ENCODE measurements at regions of chr3 and their contacts with region 1.

Region 1: GRCh38 chr3:129160891-129161859 is at the start of gene ISY1:
- DNase-seq: peak; percentile 93 to 96 (median 95)
- H3K4me3 ChIP-seq: peak within 1 kb of the TSS; percentile 84 to 99 (median 92)
- H3K27ac ChIP-seq: peak within 1 kb of the TSS; percentile 94 to 97
- H3K4me1 ChIP-seq: peaks cover 9 to 30% (median 22%) of the 10 kb centered on the region in 4 experiments
- H3K27me3 ChIP-seq: no peaks in the 10 kb centered on the region

Region 2: DNA sequence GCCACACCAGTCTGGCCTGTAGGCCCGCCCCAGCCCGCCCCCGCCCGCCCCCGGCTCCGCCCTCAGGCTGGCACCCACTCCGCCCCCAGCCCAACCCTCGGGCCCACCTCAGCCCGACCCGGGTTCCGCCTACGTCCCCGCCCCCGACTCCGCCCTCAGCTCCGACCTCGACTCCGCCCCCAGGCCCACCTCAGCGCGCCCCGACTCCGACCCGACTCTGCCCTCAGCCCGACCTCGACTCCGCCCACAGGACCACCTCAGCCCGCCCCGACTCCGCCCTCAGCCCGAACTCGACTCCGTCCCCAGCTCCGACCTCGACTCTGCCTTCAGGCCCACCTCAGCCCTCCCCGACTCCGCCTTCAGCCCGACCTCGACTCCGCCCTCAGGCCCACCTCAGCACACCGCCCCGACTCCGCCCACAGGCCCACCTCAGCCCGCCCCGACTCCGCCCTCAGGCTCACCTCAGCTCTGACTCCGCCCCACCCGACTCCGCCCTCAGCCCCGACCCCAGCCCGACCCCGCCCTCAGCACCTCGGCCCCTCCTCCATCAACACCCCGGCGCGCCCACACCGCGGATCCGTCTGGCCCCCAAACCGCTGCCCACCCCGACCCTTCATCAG is 39.3 kb before region 1 on chr3 and contains the start of gene RAB43:
- CTCF ChIA-PET with region 1: interaction called, 13 read pairs
- POLR2A ChIA-PET with region 1: no interaction called
- DNase-seq: peak; percentile 81 to 88 (median 86)
- H3K4me3 ChIP-seq: peak within 1 kb of the TSS; percentile 58 to 90 (median 78)
- H3K27ac ChIP-seq: peak within 1 kb of the TSS in 1 of 2 experiments; percentile 66
- H3K4me1 ChIP-seq: peaks cover 11 to 58% (median 46%) of the 10 kb centered on the region in 4 experiments
- H3K27me3 ChIP-seq: no peaks in the 10 kb centered on the region

Region 3: DNA sequence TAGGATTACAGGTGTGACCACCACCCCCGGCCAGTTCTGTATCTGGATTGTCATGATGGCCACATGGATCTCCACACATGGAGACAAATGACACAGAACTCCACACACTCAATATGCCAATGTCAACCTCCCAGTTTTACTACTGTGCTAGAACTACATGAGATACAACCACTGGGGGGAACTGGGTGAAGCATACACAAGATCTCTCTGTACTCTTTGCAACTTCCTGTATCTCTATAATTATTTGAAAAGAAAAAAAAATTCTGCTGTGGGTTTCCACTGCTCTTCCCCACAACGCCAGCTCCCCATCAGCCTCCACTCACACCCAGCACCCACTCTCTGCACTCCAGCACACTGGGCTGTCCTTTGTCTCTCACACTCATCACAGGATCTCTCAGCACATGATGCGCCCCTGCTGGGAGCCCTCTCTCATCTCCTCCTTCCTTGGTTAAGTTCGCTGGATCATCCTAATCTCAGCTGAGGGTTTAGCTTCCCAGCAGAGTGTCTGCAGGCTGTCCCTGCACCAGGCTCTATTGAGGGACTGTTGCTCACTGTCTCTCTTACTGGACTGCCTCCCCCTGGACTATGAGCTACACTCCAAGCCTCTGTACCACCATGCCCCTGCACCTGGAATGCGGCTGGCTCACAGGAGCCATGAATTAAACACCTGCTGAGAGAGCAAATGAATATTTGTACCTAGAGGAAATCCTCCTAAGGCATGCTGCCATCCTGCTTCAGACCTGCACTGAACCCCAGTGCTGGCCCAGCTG is 28.9 kb before region 1 on chr3:
- CTCF ChIA-PET with region 1: interaction called, 11 read pairs
- POLR2A ChIA-PET with region 1: no interaction called
- DNase-seq: no peak
- H3K4me3 ChIP-seq: no peak overlapping the region
- H3K27ac ChIP-seq: no peak overlapping the region
- H3K4me1 ChIP-seq: peaks cover 0 to 11% (median 11%) of the 10 kb centered on the region in 4 experiments
- H3K27me3 ChIP-seq: no peaks in the 10 kb centered on the region

Region 4: GRCh38 chr3:129144786-129145185 is 16.4 kb before region 1 on chr3:
- CTCF ChIA-PET with region 1: no interaction called
- POLR2A ChIA-PET with region 1: no interaction called
- DNase-seq: no peak
- H3K4me3 ChIP-seq: no peak overlapping the region
- H3K27ac ChIP-seq: no peak overlapping the region
- H3K4me1 ChIP-seq: no peaks in the 10 kb centered on the region
- H3K27me3 ChIP-seq: no peaks in the 10 kb centered on the region

Region 5: DNA sequence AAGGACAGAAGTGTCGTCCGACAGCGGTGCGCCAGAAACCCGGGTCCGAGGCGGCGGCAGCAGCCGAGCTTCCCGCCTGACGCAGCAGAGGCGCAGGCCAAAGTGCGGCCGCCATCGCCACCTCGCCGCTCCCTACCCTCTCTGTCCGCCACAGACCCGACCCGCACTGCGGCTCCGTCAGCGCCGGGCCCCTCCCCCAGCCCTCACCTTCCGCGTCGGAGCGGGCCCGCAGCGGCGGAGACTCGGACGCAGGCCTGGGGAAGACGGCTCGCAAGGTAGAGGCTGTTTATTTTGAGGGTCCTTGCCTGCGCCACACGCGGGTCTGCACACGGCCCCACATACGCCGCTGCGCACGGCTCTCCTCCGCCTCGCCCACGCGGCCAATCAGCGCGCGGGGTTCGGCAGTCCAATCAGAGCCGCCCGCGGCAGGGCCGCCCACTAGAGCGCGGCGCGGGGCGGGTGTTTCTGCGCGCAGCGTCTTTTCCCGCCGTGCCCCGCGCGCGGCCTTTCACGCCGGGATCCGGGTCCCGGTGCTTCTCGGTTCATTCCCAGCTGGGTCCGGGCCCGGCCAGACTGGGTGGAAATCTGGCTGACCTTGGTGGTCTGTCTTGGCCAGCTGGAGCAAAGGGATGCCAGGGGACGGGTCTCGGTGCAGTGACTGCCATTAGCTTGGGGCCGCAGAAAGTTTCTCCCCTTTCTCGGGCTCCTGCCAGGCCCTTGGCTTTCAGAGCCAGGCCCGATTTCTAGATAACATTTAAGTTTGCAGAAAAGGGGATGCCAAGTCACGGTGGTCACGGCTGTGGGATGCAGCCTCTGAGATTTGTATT is 22.6 kb after region 1 on chr3 and contains the start of gene CNBP:
- CTCF ChIA-PET with region 1: interaction called, 16 read pairs
- POLR2A ChIA-PET with region 1: interaction called, 12 read pairs
- DNase-seq: peak; percentile 95 to 98 (median 97)
- H3K4me3 ChIP-seq: peak within 1 kb of the TSS; percentile 69 to 98 (median 93)
- H3K27ac ChIP-seq: peak within 1 kb of the TSS; percentile 96 to 98
- H3K4me1 ChIP-seq: peaks cover 25 to 47% (median 40%) of the 10 kb centered on the region in 4 experiments
- H3K27me3 ChIP-seq: no peaks in the 10 kb centered on the region

Region 6: DNA sequence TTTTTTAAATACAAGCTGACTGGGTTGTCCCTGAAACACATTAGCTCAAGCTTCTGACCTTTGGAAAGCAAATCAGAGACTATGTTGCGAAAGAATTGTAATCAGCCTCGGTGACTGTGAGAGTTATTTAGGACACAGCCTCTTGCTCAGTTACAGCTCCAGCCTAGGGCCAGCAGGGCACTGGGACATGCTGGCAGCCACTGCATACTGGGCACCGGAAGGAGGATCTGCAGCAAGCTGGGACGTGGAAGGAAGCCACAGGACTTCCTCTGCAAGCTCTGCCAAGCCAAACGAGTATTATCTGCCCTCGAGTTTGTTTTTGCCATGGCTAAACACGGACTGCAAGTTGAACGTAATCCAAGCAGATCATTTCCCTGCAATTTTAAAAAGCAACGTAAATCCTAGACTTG is 63.8 kb after region 1 on chr3:
- CTCF ChIA-PET with region 1: interaction called, 10 read pairs
- POLR2A ChIA-PET with region 1: no interaction called
- DNase-seq: peak in 1 of 3 donors; percentile 47
- H3K4me3 ChIP-seq: peak overlapping the region in 6 of 7 experiments; percentile 33 to 76 (median 50)
- H3K27ac ChIP-seq: peak overlapping the region; percentile 2 to 36
- H3K4me1 ChIP-seq: peaks cover 23 to 56% (median 39%) of the 10 kb centered on the region in 4 experiments
- H3K27me3 ChIP-seq: no peaks in the 10 kb centered on the region

Region 7: DNA sequence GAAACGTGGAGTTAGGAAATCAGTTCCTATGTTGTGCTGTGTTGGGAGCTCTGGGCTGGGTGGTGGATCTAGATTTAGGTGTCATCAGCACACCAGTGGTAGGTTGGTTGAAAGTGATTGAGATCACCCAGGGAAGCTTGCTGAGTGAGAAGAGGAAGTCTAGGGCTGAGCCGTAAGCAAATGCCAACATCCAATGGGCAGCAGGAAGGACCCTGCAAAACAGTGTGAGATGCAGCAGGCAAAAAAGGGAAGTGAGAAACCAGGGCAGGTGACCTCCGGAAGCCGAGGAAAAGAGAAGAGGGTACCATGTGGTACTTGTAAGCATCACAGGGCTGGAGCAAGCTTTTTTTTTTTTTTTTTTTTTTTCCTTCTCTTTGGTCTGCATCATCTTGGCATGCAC is 72.4 kb after region 1 on chr3:
- CTCF ChIA-PET with region 1: interaction called, 11 read pairs
- POLR2A ChIA-PET with region 1: no interaction called
- DNase-seq: peak; percentile 87 to 97 (median 96)
- H3K4me3 ChIP-seq: no peak overlapping the region
- H3K27ac ChIP-seq: no peak overlapping the region
- H3K4me1 ChIP-seq: peaks cover 9 to 55% (median 38%) of the 10 kb centered on the region in 4 experiments
- H3K27me3 ChIP-seq: no peaks in the 10 kb centered on the region

Region 8: DNA sequence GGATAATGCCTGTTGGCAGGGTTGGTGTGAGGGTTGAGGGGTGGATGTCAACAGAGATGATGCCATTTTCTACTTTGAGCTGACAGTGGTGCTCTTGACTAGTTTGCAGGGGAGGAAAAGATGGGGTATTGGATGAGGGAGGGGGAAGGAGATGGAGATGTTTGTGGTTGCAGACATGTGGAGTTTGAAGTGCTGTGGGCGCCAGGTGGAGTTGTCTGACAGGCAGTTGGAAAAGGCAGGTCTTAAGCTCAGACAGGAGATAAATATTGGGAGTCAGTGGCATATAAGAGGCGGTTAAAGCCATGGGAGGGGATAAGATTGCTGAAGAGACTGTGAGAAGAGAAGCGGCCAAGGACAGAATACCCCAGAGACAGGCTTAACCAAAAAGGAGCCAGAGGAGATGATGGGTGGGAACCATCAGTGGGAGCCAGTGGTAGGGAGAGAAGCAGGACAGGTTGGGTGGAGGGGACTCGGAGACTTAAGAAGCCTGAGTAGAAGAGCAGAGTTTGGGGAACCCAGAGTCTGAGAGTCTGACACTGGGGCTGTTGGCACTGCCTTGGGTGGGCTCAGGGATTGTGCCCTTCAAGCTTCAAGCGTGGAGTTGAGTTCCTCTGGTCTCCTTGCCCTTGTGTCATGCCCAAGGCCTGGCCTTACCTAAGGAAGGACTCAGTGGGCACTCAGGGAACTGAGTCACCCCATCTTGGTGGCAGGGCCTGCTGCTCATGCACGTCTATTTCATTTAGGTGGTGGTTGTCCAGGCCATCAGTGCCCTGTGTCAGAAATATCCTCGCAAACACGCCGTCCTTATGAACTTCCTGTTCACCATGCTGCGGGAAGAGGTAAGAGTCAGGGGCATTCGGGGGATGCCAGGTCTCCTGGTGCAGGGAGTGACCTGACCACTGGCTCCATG is 102.2 kb after region 1 on chr3:
- CTCF ChIA-PET with region 1: no interaction called
- POLR2A ChIA-PET with region 1: no interaction called
- DNase-seq: no peak
- H3K4me3 ChIP-seq: no peak overlapping the region
- H3K27ac ChIP-seq: no peak overlapping the region
- H3K4me1 ChIP-seq: no peaks in the 10 kb centered on the region
- H3K27me3 ChIP-seq: no peaks in the 10 kb centered on the region

Measured in common myeloid progenitor, CD34-positive (primary cell).